ENCODE measurements at regions of chr18 and their contacts with region 1.

Region 1: DNA sequence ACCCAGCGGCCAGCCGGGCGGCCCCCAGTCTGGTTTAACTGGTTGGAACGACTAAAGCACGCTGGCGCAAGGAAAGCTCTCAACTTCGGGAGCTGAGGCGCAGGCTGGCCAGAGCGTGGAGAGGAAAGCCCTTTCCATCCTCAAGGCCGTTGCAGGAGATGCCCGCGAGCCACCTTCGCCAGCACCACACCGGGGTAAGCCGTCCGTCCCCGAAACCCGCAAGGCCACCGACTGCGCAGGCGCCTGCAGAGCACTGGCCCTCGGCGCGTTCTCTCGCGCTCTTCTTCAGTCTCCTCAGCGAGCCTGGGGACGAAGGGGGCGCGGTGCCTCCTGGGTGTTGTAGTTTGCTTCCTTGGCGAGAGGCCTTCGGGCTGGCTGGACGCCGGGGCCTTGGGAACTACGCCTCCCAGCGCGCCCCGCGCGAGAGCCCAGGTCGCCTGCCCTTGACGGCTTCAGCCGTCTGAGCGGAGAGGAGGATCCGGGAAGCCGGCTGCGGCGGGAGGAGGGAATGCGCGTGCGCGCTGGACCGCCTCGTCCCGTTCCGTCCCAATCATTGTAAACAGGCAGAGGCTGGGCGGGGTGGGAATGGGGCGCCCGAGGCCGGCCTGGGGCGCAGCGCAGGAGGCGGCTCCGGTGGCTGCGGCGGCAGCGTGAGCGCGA is at the start of gene RALBP1:
- DNase-seq: peak; percentile 94
- ATAC-seq: peak; percentile 98
- H3K4me3 Mint-ChIP-seq: peak within 1 kb of the TSS; percentile 97
- H3K27ac Mint-ChIP-seq: peak within 1 kb of the TSS; percentile 91
- H3K4me1 Mint-ChIP-seq: peaks cover 25% of the 10 kb centered on the region
- H3K27me3 Mint-ChIP-seq: peaks cover 8% of the 10 kb centered on the region
- CTCF ChIP-seq: no peak
- total RNA-seq, gene RALBP1: 31.9 and 32.7 TPM in 2 replicates

Region 2: DNA sequence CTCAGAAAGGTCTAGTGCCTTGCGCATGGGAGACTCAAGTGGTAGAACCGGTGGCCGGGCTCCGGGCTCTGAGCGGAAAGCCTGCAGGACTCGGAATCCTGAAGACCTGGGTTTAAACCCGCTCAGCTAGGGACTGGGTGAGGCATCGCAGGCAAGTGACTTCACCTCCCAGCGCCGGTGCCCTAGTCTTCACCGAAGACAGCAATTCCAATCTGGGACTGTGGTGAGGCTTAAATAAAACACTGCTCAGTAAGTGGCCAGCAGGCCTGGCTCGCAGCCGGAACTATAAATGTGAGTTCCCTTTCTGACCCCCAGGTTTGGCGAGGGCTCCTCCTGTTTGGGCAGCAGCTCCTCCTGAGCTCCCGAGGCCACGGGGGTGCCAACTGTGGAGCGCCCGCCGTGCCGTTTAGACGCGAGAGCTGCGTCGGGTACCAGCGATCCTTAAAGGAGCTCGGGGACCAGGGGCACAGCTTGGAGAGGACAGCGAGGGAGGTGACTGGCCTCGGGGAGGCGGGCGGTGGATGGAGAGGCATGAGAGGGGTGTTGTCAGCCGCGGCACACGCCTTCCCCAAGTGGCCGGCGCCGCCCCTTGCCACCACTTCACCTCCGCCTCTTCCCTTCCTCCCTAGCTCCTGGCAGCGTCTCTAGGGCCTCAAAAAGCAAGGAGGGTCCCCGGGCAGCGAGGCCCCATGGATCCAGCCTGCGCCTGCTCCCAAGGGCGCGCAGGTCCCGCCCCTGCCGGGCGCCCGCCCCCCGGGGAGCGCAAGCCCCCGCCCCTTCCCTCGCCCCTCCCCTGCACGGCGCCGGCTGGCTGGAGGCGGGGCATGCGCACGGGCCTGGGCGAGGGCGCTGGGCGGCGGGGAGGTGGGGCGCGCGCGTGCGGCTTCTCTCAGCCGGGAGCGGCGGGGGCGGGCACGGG is 770.5 kb before region 1 on chr18:
- CTCF ChIA-PET with region 1: no interaction called
- POLR2A ChIA-PET with region 1: no interaction called
- intact Hi-C with region 1: loop called (anchors 1 kb)
- DNase-seq: peak; percentile 89
- ATAC-seq: peak; percentile 92
- H3K4me3 Mint-ChIP-seq: peak overlapping the region; percentile 89
- H3K27ac Mint-ChIP-seq: peak overlapping the region; percentile 41
- H3K4me1 Mint-ChIP-seq: peaks cover 26% of the 10 kb centered on the region
- H3K27me3 Mint-ChIP-seq: peaks cover 14% of the 10 kb centered on the region
- CTCF ChIP-seq: no peak

Region 3: GRCh38 chr18:9102508-9103375 is 372.4 kb before region 1 on chr18 and contains the start of gene NDUFV2:
- CTCF ChIA-PET with region 1: no interaction called
- POLR2A ChIA-PET with region 1: no interaction called
- intact Hi-C with region 1: loop called (anchors 5 kb)
- DNase-seq: peak; percentile 99
- ATAC-seq: peak; percentile 96
- H3K4me3 Mint-ChIP-seq: peak within 1 kb of the TSS; percentile 94
- H3K27ac Mint-ChIP-seq: peak within 1 kb of the TSS; percentile 94
- H3K4me1 Mint-ChIP-seq: peaks cover 51% of the 10 kb centered on the region
- H3K27me3 Mint-ChIP-seq: no peaks in the 10 kb centered on the region
- CTCF ChIP-seq: no peak
- total RNA-seq, gene NDUFV2: 168 and 169 TPM in 2 replicates

Region 4: DNA sequence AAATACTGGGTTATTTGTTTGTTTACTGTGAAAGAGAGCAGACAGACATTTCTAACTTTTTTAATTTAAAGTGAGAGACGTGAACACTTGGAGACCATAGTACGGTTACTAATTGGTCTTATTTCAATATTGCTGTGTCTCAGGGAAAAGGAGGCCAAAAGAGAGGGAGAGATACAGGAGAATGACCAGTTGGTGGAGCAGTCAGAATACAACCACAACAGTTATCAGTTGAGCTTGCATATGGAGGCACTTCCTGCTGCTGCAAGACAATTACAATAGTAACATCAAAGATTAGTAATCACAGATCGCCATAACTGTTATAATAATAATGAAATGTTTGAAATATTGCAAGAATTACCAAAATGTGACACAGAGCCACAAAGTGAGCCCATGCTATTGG is 82.4 kb before region 1 on chr18:
- CTCF ChIA-PET with region 1: no interaction called
- POLR2A ChIA-PET with region 1: no interaction called
- intact Hi-C with region 1: no loop called
- DNase-seq: no peak
- ATAC-seq: no peak
- H3K4me3 Mint-ChIP-seq: no peak overlapping the region
- H3K27ac Mint-ChIP-seq: no peak overlapping the region
- H3K4me1 Mint-ChIP-seq: peaks cover 4% of the 10 kb centered on the region
- H3K27me3 Mint-ChIP-seq: no peaks in the 10 kb centered on the region
- CTCF ChIP-seq: no peak

Region 5: GRCh38 chr18:9404565-9405060 is 70.5 kb before region 1 on chr18:
- CTCF ChIA-PET with region 1: no interaction called
- POLR2A ChIA-PET with region 1: no interaction called
- intact Hi-C with region 1: loop called (anchors 2 kb)
- DNase-seq: peak; percentile 23
- ATAC-seq: peak; percentile 84
- H3K4me3 Mint-ChIP-seq: peak overlapping the region; percentile 86
- H3K27ac Mint-ChIP-seq: peak overlapping the region; percentile 67
- H3K4me1 Mint-ChIP-seq: peaks cover 17% of the 10 kb centered on the region
- H3K27me3 Mint-ChIP-seq: no peaks in the 10 kb centered on the region
- CTCF ChIP-seq: no peak

Region 6: DNA sequence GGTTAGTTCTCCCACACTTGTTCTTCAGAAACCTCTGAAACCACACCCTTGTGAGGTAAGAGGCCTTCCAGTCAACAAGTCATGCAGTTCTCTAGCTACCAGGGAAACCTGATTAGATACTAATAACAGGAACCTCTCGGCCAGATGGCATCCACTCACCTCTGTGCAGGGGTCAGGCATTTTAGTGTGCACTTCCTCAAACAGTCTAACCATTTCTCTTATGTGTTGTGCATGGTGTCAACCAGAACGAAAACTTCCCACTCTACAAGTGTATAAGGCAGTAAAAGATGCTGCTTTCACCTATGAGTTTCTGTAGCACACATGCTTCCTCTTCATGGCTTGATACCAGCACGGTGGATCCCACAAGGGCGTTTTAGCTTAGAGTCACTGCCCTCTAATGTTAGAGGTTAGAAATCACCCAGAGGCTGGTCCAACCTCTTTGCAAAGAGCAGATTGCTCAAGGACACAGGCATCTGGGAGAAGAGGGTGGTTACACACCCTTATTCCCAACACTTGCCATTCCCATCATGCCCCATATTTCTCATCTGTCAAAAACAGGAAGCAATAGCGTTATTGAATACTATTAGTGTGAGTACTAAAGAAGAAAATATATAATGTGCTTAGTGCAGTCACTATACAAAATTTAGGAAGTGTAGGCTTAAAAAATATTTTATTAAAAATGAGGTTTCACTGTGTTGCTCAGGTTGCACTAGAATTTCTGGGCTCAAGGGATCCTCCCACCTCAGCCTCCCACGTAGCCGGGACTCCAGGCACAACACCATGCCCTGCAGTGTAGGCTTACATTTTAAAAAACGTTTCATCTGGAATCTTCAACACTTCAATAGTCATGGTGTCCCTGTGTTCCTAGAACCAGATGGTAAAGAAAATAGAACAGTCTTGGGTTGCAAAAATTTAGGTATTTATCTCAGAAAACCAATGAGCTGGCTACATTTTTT is 198.5 kb after region 1 on chr18:
- CTCF ChIA-PET with region 1: no interaction called
- POLR2A ChIA-PET with region 1: interaction called, 3 read pairs
- intact Hi-C with region 1: loop called (anchors 1 kb)
- DNase-seq: peak; percentile 25
- ATAC-seq: peak; percentile 95
- H3K4me3 Mint-ChIP-seq: peak overlapping the region; percentile 35
- H3K27ac Mint-ChIP-seq: peak overlapping the region; percentile 93
- H3K4me1 Mint-ChIP-seq: peaks cover 15% of the 10 kb centered on the region
- H3K27me3 Mint-ChIP-seq: no peaks in the 10 kb centered on the region
- CTCF ChIP-seq: no peak

Region 7: DNA sequence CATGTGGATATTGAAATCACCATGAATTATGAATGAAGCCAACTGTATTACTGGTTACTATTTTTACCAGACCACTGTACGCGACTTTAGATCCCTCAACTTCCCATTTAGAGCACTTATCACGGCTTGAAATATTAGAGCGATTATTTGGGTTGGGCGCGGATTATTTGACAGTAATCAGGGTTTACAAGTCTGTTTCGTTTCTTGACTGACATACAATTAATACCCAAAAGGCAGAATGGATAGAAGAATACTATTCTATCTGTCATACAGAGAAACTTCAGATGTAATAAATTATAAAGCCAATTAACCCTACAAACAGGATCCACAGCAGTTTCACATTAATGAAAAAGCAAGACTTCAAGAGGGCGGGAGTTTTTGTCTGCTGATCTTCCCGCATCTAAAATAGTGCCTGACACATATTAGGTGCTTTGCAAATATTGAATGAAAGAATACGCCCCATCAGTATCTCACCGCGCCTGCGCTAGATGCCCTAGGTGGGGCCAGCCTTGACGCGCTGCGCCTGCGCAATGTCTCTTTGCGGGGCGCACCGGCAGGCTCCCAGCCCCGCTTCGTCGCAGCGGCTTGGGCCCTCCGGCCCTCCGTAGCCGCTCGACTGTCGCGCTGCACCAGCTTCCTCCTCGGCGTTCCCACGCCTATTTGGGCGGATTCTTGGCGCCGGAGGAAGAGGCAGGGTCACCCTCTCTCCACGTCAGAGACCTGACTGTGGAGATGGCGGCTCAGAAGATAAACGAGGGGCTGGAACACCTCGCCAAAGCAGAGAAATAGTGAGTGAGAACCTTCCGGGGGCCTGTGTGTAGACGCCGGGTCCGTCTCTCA is 1050.5 kb after region 1 on chr18 and contains the start of gene NAPG:
- CTCF ChIA-PET with region 1: no interaction called
- POLR2A ChIA-PET with region 1: no interaction called
- intact Hi-C with region 1: loop called (anchors 1 kb)
- DNase-seq: peak; percentile 86
- ATAC-seq: peak; percentile 91
- H3K4me3 Mint-ChIP-seq: peak within 1 kb of the TSS; percentile 99
- H3K27ac Mint-ChIP-seq: peak within 1 kb of the TSS; percentile 96
- H3K4me1 Mint-ChIP-seq: peaks cover 49% of the 10 kb centered on the region
- H3K27me3 Mint-ChIP-seq: no peaks in the 10 kb centered on the region
- CTCF ChIP-seq: no peak
- total RNA-seq, gene NAPG: 24.5 and 33.3 TPM in 2 replicates

Region 8: DNA sequence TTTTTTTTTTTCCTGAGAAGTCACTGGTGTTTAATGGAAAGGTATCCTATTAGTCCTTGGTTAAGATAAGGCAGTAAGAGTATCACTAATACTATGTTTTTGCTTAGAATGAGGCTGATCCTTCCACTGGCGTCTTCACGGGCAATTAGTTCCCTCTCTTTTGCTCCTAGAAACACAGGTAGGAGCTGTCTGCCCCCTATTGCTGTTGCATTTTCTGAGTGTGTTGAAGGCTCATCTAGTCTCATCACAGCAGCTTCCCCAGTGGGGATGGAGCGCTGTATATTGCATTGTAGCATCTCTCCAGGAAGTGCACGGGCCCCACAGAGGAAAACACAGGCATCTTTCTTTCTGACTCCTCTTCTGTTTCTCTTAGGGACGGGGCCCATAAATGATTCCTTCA is 1195.7 kb after region 1 on chr18:
- CTCF ChIA-PET with region 1: no interaction called
- POLR2A ChIA-PET with region 1: no interaction called
- intact Hi-C with region 1: no loop called
- DNase-seq: no peak
- ATAC-seq: no peak
- H3K4me3 Mint-ChIP-seq: no peak overlapping the region
- H3K27ac Mint-ChIP-seq: no peak overlapping the region
- H3K4me1 Mint-ChIP-seq: no peaks in the 10 kb centered on the region
- H3K27me3 Mint-ChIP-seq: no peaks in the 10 kb centered on the region
- CTCF ChIP-seq: no peak